BJ (cell line): ENCODE measurements at regions of chr19 and their contacts with region 1.

Region 1: GRCh38 chr19:41226053-41226873 is 7.2 kb downstream of the AXL start:
- DNase-seq: peak; percentile 26
- H3K4me3 ChIP-seq: peak overlapping the region; percentile 31
- H3K27me3 ChIP-seq: no peaks in the 10 kb centered on the region
- CTCF ChIP-seq: no peak

Region 2: DNA sequence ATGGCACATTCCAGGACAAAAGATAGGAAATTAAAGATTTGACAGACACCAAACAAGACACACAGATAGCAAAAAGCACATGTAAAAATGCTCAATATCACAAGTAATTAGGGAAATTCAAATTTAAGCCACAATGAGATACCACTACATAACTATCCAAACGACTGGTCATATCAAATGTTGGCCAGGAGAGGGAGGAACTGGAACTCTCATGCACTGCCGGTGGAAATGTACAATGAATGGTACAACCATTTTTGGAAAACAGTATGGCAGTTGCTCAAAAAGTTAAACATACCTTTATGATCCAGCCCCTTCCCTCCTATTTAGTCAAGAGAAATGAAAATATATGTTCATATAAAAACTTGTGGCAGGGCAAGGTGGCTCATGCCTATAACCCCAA is 70.1 kb before region 1 on chr19:
- CTCF ChIA-PET with region 1: no interaction called
- POLR2A ChIA-PET with region 1: no interaction called
- DNase-seq: no peak
- H3K4me3 ChIP-seq: no peak overlapping the region
- H3K27me3 ChIP-seq: no peaks in the 10 kb centered on the region
- CTCF ChIP-seq: peak; percentile 12; the same call in 1 of the 2 replicates

Region 3: GRCh38 chr19:41263850-41264580 is 37.8 kb after region 1 on chr19 and contains the start of gene HNRNPUL1:
- CTCF ChIA-PET with region 1: interaction called, 11 read pairs
- POLR2A ChIA-PET with region 1: no interaction called
- DNase-seq: peak; percentile 100
- H3K4me3 ChIP-seq: peak within 1 kb of the TSS; percentile 91
- H3K27me3 ChIP-seq: no peaks in the 10 kb centered on the region
- CTCF ChIP-seq: peak; percentile 40; the same call in 1 of the 2 replicates
- polyA plus RNA-seq, gene HNRNPUL1: 35.4 and 37.9 TPM in 2 replicates